GM12878 (cell line): ENCODE measurements at regions of chr6 and their contacts with region 1.

Region 1: GRCh38 chr6:41424370-41425058 is 89.1 kb downstream of the NCR2 start:
- DNase-seq: peak; percentile 31
- ATAC-seq: peak; percentile 71
- H3K4me3 ChIP-seq: no peak overlapping the region
- H3K27ac ChIP-seq: no peak overlapping the region
- H3K4me1 ChIP-seq: peaks cover 10% of the 10 kb centered on the region
- H3K27me3 ChIP-seq: peaks cover 7 to 20% of the 10 kb centered on the region in 2 experiments
- CTCF ChIP-seq: peak; percentile 84 to 87 (median 86)
- EP300 ChIP-seq: no peak
- POLR2A ChIP-seq: no peak
- RAD21 ChIP-seq: peak; percentile 82

Region 2: GRCh38 chr6:41182069-41183034 is 242.2 kb before region 1 on chr6:
- CTCF ChIA-PET with region 1: no interaction called
- POLR2A ChIA-PET with region 1: no interaction called
- RAD21 ChIA-PET with region 1: no interaction called
- SMC1A ChIA-PET with region 1: no interaction called
- in situ Hi-C with region 1: no loop called
- intact Hi-C with region 1: no loop called
- DNase-seq: no peak
- ATAC-seq: peak; percentile 99
- H3K4me3 ChIP-seq: no peak overlapping the region
- H3K27ac ChIP-seq: no peak overlapping the region
- H3K4me1 ChIP-seq: no peaks in the 10 kb centered on the region
- H3K27me3 ChIP-seq: no peaks in the 10 kb centered on the region
- CTCF ChIP-seq: peak; percentile 73 to 77 (median 76)
- EP300 ChIP-seq: no peak
- POLR2A ChIP-seq: no peak
- RAD21 ChIP-seq: peak; percentile 66

Region 3: GRCh38 chr6:41442800-41443501 is 18.4 kb after region 1 on chr6:
- CTCF ChIA-PET with region 1: interaction called, 24 read pairs
- POLR2A ChIA-PET with region 1: interaction called, 5 read pairs
- RAD21 ChIA-PET with region 1: interaction called, 8 read pairs
- SMC1A ChIA-PET with region 1: interaction called, 27 read pairs
- in situ Hi-C with region 1: no loop called
- intact Hi-C with region 1: no loop called
- DNase-seq: no peak
- ATAC-seq: no peak
- H3K4me3 ChIP-seq: no peak overlapping the region
- H3K27ac ChIP-seq: no peak overlapping the region
- H3K4me1 ChIP-seq: peaks cover 20% of the 10 kb centered on the region
- H3K27me3 ChIP-seq: no peaks in the 10 kb centered on the region; a peak in 2 of 4 replicates
- CTCF ChIP-seq: peak in 2 of 3 experiments; percentile 27 to 28; a peak in 1 of 6 replicates
- EP300 ChIP-seq: no peak
- POLR2A ChIP-seq: no peak
- RAD21 ChIP-seq: no peak

Region 4: DNA sequence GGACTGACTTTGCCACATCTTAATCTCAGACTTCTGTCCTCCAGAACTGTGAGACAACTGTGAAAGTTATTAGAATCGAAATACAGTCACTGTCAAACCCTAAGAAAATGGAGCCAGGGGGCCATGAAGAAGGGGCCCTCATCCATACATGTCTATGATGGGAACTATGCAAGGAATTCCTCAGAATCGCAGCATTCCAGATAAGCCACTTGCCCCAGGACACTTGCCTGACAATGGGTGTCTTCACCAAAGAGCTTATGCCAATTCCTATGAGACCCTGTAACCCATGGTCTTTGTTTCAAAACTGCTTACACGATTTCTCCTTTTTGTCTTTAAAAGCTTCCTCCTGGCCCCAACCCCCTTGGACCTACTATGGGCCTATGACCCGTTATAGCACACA is 31.3 kb after region 1 on chr6:
- CTCF ChIA-PET with region 1: interaction called, 90 read pairs
- POLR2A ChIA-PET with region 1: interaction called, 3 read pairs
- RAD21 ChIA-PET with region 1: interaction called, 38 read pairs
- SMC1A ChIA-PET with region 1: interaction called, 25 read pairs
- in situ Hi-C with region 1: no loop called
- intact Hi-C with region 1: no loop called
- DNase-seq: no peak
- ATAC-seq: no peak
- H3K4me3 ChIP-seq: no peak overlapping the region
- H3K27ac ChIP-seq: no peak overlapping the region
- H3K4me1 ChIP-seq: no peaks in the 10 kb centered on the region
- H3K27me3 ChIP-seq: peaks cover 4% of the 10 kb centered on the region in 2 experiments; a peak in 2 of 4 replicates
- CTCF ChIP-seq: no peak
- EP300 ChIP-seq: no peak
- POLR2A ChIP-seq: no peak
- RAD21 ChIP-seq: no peak

Region 5: DNA sequence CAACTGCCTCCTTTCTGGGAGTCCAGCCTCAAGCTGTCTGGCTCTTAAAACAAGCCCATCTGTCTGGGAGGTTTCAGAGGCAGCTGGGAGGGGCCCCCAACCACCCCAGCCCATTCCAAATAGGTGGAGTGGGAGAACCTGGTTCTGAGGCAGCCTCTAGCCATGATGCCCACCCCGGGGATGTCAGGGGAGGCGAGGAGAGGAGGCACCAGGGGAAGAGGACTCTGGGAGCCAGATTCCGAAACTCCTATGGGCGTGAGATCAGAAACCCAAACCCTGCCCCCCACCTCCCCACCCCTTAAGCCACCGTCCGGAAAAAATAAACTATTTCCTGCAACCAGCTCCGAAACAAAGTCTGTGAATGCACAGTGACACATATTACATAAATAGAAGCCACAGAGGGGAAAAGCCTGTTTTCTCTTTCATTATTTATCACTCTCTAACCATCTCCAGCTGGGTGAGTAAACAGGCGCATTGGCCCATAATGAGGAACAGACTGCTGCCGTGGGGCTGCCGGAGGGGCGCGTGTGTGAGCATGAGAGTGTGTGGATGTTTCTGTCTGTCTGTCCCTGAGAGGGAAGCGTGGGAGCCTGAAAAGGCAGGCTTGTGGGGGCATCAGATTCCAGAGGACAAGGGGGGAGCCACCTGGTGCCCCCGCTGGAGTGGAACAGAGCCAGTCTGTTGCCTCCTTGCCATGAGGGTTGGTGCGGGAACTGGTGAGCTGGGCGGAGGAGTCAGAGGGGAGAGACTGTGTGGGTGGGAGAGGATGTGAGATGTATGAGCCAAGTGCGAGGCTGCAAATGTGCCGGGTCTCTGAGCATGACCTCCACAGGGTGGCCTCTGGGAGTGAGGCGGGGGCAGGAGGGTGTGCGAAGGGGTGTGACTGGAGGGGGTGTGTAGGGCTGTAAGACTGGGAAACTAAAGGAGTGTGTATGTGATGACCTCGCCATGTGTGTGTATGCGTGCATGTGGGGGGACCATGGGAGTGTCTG is 107.4 kb after region 1 on chr6:
- CTCF ChIA-PET with region 1: interaction called, 4 read pairs
- POLR2A ChIA-PET with region 1: no interaction called
- RAD21 ChIA-PET with region 1: interaction called, 10 read pairs
- SMC1A ChIA-PET with region 1: interaction called, 7 read pairs
- in situ Hi-C with region 1: no loop called
- intact Hi-C with region 1: no loop called
- DNase-seq: peak; percentile 92
- ATAC-seq: peak; percentile 90
- H3K4me3 ChIP-seq: peak overlapping the region; percentile 33; the same call in 1 of the 2 replicates
- H3K27ac ChIP-seq: peak overlapping the region; percentile 93
- H3K4me1 ChIP-seq: peaks cover 34% of the 10 kb centered on the region
- H3K27me3 ChIP-seq: 0 out of 4 replicates have a peak, but pooled peaks cover 0 to 2% of the 10 kb centered on the region in 2 experiments
- CTCF ChIP-seq: peak in 1 of 3 experiments; percentile 15; a peak in 1 of 6 replicates
- EP300 ChIP-seq: peak; percentile 95 to 96
- POLR2A ChIP-seq: peak; percentile 83
- RAD21 ChIP-seq: peak; percentile 28

Region 6: GRCh38 chr6:41586252-41587007 is 161.9 kb after region 1 on chr6:
- CTCF ChIA-PET with region 1: interaction called, 19 read pairs
- POLR2A ChIA-PET with region 1: no interaction called
- RAD21 ChIA-PET with region 1: interaction called, 3 read pairs
- SMC1A ChIA-PET with region 1: interaction called, 10 read pairs
- in situ Hi-C with region 1: loop called (anchors 5 kb)
- intact Hi-C with region 1: no loop called
- DNase-seq: no peak
- ATAC-seq: no peak
- H3K4me3 ChIP-seq: no peak overlapping the region
- H3K27ac ChIP-seq: no peak overlapping the region
- H3K4me1 ChIP-seq: no peaks in the 10 kb centered on the region
- H3K27me3 ChIP-seq: no peaks in the 10 kb centered on the region
- CTCF ChIP-seq: no peak
- EP300 ChIP-seq: no peak
- POLR2A ChIP-seq: no peak
- RAD21 ChIP-seq: no peak

Region 7: DNA sequence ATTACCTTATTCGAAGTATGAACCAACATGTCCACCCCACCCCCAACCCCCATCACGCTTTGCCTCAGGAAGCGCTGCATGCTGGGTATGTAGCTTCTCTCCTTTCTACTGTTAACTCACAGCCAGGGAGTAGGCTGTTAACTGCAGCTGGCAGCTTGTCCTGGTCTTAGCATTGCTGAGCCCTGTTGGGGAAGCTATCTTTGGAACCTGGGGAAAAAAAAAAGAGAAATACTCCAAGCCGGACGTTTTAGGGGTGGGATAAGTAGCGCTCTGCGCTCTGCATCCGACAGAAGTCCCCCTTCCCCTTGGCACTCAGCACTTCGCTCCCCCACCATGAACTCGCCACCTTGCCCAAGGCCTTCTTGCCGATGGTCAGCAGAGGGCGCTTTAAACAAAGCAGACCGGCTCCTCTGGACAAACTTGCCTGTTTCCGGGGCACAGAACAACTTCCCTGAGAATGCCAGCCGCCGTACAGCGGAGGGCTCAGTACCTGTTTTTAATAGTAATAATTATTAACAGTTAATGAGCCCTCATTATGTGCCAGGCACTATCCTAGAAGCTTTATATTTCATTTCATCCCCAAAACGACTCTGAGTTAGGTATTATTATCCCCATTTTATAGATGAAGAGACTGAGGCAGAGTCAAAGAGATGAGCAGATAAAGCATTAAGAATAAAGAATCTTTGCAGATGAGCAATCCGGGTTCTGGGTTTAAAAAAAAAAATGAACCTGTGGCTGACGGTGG is 178.5 kb after region 1 on chr6:
- CTCF ChIA-PET with region 1: interaction called, 12 read pairs
- POLR2A ChIA-PET with region 1: no interaction called
- RAD21 ChIA-PET with region 1: interaction called, 4 read pairs
- SMC1A ChIA-PET with region 1: interaction called, 3 read pairs
- in situ Hi-C with region 1: no loop called
- intact Hi-C with region 1: no loop called
- DNase-seq: peak; percentile 24
- ATAC-seq: peak; percentile 94
- H3K4me3 ChIP-seq: no peak overlapping the region
- H3K27ac ChIP-seq: no peak overlapping the region
- H3K4me1 ChIP-seq: no peaks in the 10 kb centered on the region
- H3K27me3 ChIP-seq: no peaks in the 10 kb centered on the region; a peak in 1 of 4 replicates
- CTCF ChIP-seq: peak; percentile 93 to 96 (median 96)
- EP300 ChIP-seq: no peak
- POLR2A ChIP-seq: no peak
- RAD21 ChIP-seq: peak; percentile 90